Pancreas (tissue), 10 donors: ENCODE measurements at regions of chr11 and their contacts with region 1.

Region 1: GRCh38 chr11:18731949-18732821 is 6.2 kb upstream of the IGSF22 start:
- DNase-seq: peak in 3 of 6 donors; percentile 50 to 85 (median 64)
- ATAC-seq: peak in 3 of 4 donors; percentile 70 to 88 (median 82)
- H3K4me3 ChIP-seq: no peak overlapping the region
- H3K27ac ChIP-seq: no peak overlapping the region
- H3K4me1 ChIP-seq: no peaks in the 10 kb centered on the region
- H3K27me3 ChIP-seq: no peaks in the 10 kb centered on the region
- CTCF ChIP-seq: peak; percentile 90 to 96 (median 93)

Region 2: DNA sequence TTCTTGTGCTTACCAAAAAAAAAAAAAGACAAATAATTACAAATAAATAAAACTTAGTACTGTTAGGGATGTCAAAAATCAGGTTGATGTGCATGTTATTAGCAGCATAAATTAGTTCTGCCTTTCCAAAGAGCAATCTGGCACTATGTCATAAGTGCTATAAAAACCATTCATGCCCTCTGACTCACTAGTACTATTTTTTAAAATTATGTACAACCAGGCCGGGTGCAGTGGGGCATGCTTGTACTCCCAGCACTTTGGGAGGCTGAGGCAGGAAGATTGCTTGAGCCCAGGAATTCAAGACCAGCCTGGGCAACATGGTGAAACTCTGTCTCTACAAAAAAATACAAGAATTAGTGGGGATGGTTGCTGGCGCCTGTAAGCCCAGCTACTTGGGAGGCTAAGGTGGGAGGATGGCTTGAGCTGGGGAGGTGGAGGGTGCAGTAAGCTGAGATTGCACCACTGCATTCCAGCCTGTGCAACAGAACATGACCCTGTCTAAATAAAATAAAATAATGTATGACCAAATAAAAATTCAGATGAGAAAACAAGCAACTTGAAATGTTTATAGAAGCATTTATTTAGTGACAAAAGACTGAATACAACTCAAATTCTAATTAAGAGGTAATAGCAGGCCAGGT is 169.0 kb before region 1 on chr11:
- intact Hi-C with region 1: loop called in 1 of 3 experiments (anchors 10 kb)
- DNase-seq: no peak
- ATAC-seq: no peak
- H3K4me3 ChIP-seq: no peak overlapping the region
- H3K27ac ChIP-seq: no peak overlapping the region
- H3K4me1 ChIP-seq: no peaks in the 10 kb centered on the region
- H3K27me3 ChIP-seq: no peaks in the 10 kb centered on the region
- CTCF ChIP-seq: no peak

Region 3: DNA sequence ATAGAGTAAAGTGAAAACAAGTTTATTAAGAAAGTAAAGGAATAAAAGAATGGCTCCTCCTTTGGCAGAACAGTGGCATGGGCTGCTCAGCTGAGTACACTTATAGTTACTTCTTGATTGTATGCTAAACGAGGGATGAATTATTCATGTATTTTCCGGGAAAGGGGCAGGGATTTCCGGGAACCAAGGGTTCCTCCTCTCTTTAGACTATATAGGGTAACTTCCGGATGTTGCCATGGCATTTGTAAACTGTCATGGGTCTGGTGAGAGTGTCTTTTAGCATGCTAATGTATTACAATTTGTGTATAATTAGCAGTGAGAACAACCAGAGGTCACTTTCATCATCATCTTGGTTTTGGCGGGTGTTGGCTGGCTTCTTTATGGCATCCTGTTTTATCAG is 74.5 kb before region 1 on chr11:
- intact Hi-C with region 1: no loop called
- DNase-seq: no peak
- ATAC-seq: no peak
- H3K4me3 ChIP-seq: no peak overlapping the region
- H3K27ac ChIP-seq: no peak overlapping the region
- H3K4me1 ChIP-seq: no peaks in the 10 kb centered on the region
- H3K27me3 ChIP-seq: no peaks in the 10 kb centered on the region
- CTCF ChIP-seq: no peak

Region 4: DNA sequence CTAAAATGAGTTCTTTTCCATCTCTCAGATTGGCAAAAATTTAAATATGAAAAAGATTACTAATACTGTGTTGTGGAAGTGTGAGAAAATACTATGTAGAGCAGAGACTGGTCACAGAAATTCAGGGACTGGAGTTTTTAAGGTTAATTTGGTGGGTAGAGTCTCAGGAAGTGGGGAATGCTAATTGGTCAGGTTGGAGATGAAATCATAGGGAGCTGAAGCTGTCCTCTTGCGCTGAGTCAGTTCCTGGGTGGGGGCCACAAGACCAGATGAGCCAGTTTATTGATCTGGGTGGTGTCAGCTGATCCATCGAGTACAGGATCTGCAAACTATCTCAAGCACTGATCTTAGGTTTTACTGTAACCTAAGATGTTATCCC is 63.0 kb before region 1 on chr11:
- intact Hi-C with region 1: no loop called
- DNase-seq: peak in 2 of 6 donors; percentile 9 to 23
- ATAC-seq: peak in 3 of 4 donors; percentile 43 to 69 (median 49)
- H3K4me3 ChIP-seq: no peak overlapping the region
- H3K27ac ChIP-seq: peak overlapping the region in 2 of 4 donors; percentile 33
- H3K4me1 ChIP-seq: peaks cover 0 to 26% (median 0%) of the 10 kb centered on the region in 3 donors
- H3K27me3 ChIP-seq: no peaks in the 10 kb centered on the region
- CTCF ChIP-seq: no peak